ENCODE measurements at regions of chr2 and their contacts with region 1.

Region 1: DNA sequence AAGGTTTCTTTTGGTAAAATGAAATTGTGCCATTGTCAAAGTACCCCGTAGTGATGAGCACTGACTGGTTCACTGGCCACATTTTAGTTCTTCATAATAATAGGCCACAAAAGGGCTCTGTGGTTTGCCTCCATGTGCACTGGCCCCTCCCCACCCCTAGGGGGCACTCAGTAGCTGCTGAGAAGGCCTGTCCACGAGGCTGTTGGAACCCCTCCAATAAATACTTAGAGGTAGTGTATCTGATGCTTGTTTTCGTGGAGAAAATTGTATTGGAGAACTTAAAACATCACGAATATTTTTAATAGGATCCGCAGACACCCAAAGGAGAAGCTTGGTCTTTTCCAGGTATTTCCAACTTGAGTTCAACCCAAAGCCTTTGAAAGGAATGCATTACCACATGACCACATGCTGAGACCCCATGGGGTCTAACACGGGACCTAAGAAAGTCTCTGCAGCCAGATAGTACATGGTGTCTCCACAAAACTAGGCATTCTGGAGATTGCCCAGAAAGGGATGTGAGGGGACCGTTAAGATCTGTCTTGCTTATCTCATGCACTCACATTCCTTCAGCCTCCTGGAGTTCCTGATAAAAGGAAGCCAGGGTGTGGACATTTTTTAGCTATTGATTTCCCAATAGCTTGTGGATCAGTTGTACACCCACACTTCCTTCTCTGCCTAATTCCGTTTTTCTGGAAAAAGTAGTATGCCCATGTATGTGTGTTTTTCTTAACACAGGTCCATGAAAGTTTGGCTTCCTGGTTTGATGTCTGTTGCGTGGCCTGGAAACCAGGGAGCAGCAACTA is 28.5 kb upstream of the NOSTRIN start:
- DNase-seq: peak; percentile 84 to 97 (median 90)
- ATAC-seq: peak; percentile 95
- H3K4me3 ChIP-seq: peak overlapping the region; percentile 10; the same call in 1 of the 2 replicates
- H3K27ac ChIP-seq: peak overlapping the region; percentile 89
- H3K4me1 ChIP-seq: peaks cover 2 to 48% of the 10 kb centered on the region in 2 experiments; a peak in 4 of 5 replicates
- H3K27me3 ChIP-seq: no peaks in the 10 kb centered on the region
- CTCF ChIP-seq: peak; percentile 91 to 100 (median 99)
- EP300 ChIP-seq: peak; percentile 100
- POLR2A ChIP-seq: no peak
- RAD21 ChIP-seq: peak; percentile 97 to 99

Region 2: GRCh38 chr2:168801961-168802858 is 28.3 kb after region 1 on chr2 and contains the start of gene NOSTRIN:
- CTCF ChIA-PET with region 1: no interaction called
- POLR2A ChIA-PET with region 1: interaction called, 4 read pairs
- in situ Hi-C with region 1: no loop called
- intact Hi-C with region 1: loop called (anchors 1 kb)
- DNase-seq: peak; percentile 51 to 87 (median 61)
- ATAC-seq: peak; percentile 68
- H3K4me3 ChIP-seq: peak within 1 kb of the TSS; percentile 38
- H3K27ac ChIP-seq: peak within 1 kb of the TSS; percentile 89
- H3K4me1 ChIP-seq: peaks cover 18 to 81% of the 10 kb centered on the region in 2 experiments
- H3K27me3 ChIP-seq: no peaks in the 10 kb centered on the region
- CTCF ChIP-seq: no peak; a peak in 1 of 6 replicates
- EP300 ChIP-seq: peak; percentile 45
- POLR2A ChIP-seq: peak; percentile 69
- RAD21 ChIP-seq: no peak; a peak in 1 of 4 replicates
- polyA plus RNA-seq, gene NOSTRIN: 51.9 to 82.9 TPM

Region 3: GRCh38 chr2:168890006-168890782 is 116.3 kb after region 1 on chr2 and contains the start of gene SPC25:
- CTCF ChIA-PET with region 1: no interaction called
- POLR2A ChIA-PET with region 1: interaction called, 5 read pairs
- in situ Hi-C with region 1: no loop called
- intact Hi-C with region 1: loop called (anchors 1 kb)
- DNase-seq: peak; percentile 99
- ATAC-seq: peak; percentile 99
- H3K4me3 ChIP-seq: peak within 1 kb of the TSS; percentile 69
- H3K27ac ChIP-seq: peak within 1 kb of the TSS; percentile 76
- H3K4me1 ChIP-seq: peaks cover 0 to 7% of the 10 kb centered on the region in 2 experiments; a peak in 2 of 5 replicates
- H3K27me3 ChIP-seq: no peaks in the 10 kb centered on the region
- CTCF ChIP-seq: no peak
- EP300 ChIP-seq: no peak
- POLR2A ChIP-seq: peak; percentile 92
- RAD21 ChIP-seq: no peak; a peak in 2 of 4 replicates
- polyA plus RNA-seq, gene SPC25: 87.6 to 100 TPM

Region 4: GRCh38 chr2:168935810-168936581 is 162.1 kb after region 1 on chr2:
- CTCF ChIA-PET with region 1: no interaction called
- POLR2A ChIA-PET with region 1: interaction called, 3 read pairs
- in situ Hi-C with region 1: no loop called
- intact Hi-C with region 1: loop called (anchors 1 kb)
- DNase-seq: peak; percentile 76 to 96 (median 85)
- ATAC-seq: peak; percentile 91
- H3K4me3 ChIP-seq: peak overlapping the region; percentile 1; the same call in 1 of the 2 replicates
- H3K27ac ChIP-seq: peak overlapping the region; percentile 78
- H3K4me1 ChIP-seq: peaks cover 5 to 53% of the 10 kb centered on the region in 2 experiments
- H3K27me3 ChIP-seq: no peaks in the 10 kb centered on the region
- CTCF ChIP-seq: peak in 1 of 3 experiments; percentile 8; a peak in 2 of 6 replicates
- EP300 ChIP-seq: peak; percentile 100
- POLR2A ChIP-seq: no peak
- RAD21 ChIP-seq: peak; percentile 34

Region 5: DNA sequence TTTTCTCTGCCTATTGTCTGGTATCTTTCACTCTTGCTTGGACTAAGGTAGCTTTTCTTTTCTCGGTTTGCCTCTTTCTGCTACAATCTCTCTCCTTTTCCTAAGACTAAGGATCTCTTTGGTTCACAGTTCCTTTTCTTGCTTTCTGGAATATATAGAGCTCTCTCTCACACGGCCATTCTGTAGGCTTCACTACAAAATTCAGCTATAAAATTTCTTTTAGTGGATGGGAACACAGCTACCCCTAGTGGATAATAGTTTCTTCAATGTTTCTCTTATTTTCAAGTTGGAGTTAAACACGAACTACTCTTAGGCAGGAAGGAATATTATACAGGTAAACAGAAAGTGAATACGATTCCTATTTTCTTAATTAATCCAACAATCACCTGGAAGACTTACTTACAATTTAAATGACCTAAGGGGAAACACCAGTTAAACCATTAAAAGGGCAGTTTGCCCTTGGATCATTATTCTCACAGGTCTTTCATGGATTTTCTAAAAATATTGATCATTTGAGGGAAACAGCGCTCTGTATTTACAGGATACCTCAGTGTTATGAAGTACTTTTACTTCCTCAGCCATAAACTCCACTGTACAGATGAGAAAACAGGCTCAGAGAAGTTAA is 447.9 kb after region 1 on chr2:
- CTCF ChIA-PET with region 1: interaction called, 3 read pairs
- POLR2A ChIA-PET with region 1: no interaction called
- in situ Hi-C with region 1: no loop called
- intact Hi-C with region 1: loop called (anchors 5 kb)
- DNase-seq: peak; percentile 24 to 71 (median 42)
- ATAC-seq: peak; percentile 87
- H3K4me3 ChIP-seq: no peak overlapping the region
- H3K27ac ChIP-seq: no peak overlapping the region
- H3K4me1 ChIP-seq: peaks cover 0 to 2% of the 10 kb centered on the region in 2 experiments; a peak in 1 of 5 replicates
- H3K27me3 ChIP-seq: no peaks in the 10 kb centered on the region
- CTCF ChIP-seq: peak; percentile 57 to 84 (median 63); a peak in 5 of 6 replicates
- EP300 ChIP-seq: no peak
- POLR2A ChIP-seq: no peak
- RAD21 ChIP-seq: peak; percentile 93 to 95

Measured in K562 (cell line).